Natural killer cell (primary cell): ENCODE measurements at regions of chr6 and their contacts with region 1.

Region 1: DNA sequence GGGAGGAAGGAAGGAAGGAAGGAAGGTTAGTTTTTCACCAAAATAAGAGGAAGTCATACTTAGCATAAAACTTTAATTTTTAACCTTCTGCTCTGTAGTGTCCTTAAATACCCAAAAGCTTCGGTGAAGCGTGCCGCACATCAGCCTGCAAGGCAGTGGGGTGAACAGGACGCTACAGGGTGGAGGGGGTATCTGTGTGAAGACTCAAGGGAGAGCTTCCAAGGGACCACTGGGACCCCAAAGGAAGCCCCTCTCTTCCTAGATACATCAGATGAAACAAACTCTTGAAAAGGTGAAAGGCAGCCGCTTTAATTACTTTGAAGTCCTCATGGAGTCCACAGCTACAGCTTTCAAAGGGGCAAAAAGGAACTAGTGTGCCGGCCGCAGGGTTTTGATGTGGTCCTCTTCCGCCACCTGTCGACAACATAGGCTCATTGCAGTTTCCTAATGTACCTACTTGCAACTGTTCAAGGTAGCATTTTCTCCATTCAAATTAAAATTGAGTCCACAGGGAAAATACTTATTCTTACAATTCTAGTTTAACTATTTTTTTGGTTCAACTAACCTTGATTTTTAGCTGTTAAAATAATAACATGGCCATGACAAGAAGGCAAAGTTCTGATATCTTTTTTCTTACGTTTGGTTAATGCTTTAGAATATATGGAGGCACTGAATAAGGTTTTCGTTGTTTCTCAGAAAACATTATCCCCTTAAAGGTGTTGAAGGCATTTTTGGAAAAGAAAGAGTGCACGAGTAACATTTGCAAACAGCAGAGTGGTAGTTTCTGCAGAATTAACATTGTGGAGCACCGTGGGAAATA is 135.0 kb upstream of the RIPOR2 start:
- DNase-seq: peak; percentile 73 to 94
- ATAC-seq: peak; percentile 96 to 100 (median 99)
- H3K4me3 ChIP-seq: peak overlapping the region; percentile 11
- H3K4me3 Mint-ChIP-seq: peak overlapping the region; percentile 55
- H3K27ac ChIP-seq: peak overlapping the region; percentile 60
- H3K27ac Mint-ChIP-seq: peak overlapping the region; percentile 82 to 85
- H3K4me1 ChIP-seq: peaks cover 3% of the 10 kb centered on the region
- H3K4me1 Mint-ChIP-seq: peaks cover 6 to 16% of the 10 kb centered on the region in 2 donors
- H3K27me3 ChIP-seq: no peaks in the 10 kb centered on the region
- H3K27me3 Mint-ChIP-seq: no peaks in the 10 kb centered on the region
- CTCF ChIP-seq: peak; percentile 89

Region 2: GRCh38 chr6:24855395-24856245 is 215.1 kb before region 1 on chr6:
- intact Hi-C with region 1: loop called (anchors 1 kb)
- DNase-seq: peak; percentile 48 to 92
- ATAC-seq: peak; percentile 77 to 84 (median 83)
- H3K4me3 ChIP-seq: no peak overlapping the region
- H3K4me3 Mint-ChIP-seq: peak overlapping the region; percentile 49
- H3K27ac ChIP-seq: peak overlapping the region; percentile 45
- H3K27ac Mint-ChIP-seq: peak overlapping the region; percentile 93 to 95
- H3K4me1 ChIP-seq: peaks cover 45% of the 10 kb centered on the region
- H3K4me1 Mint-ChIP-seq: peaks cover 50 to 59% of the 10 kb centered on the region in 2 donors
- H3K27me3 ChIP-seq: no peaks in the 10 kb centered on the region
- H3K27me3 Mint-ChIP-seq: no peaks in the 10 kb centered on the region
- CTCF ChIP-seq: peak; percentile 84

Region 3: GRCh38 chr6:25017932-25018567 is 52.7 kb before region 1 on chr6:
- intact Hi-C with region 1: loop called (anchors 2 kb)
- DNase-seq: peak; percentile 69 to 92
- ATAC-seq: peak; percentile 94 to 97 (median 97)
- H3K4me3 ChIP-seq: no peak overlapping the region
- H3K4me3 Mint-ChIP-seq: no peak overlapping the region
- H3K27ac ChIP-seq: no peak overlapping the region
- H3K27ac Mint-ChIP-seq: peak overlapping the region; percentile 76 to 84
- H3K4me1 ChIP-seq: peaks cover 9% of the 10 kb centered on the region
- H3K4me1 Mint-ChIP-seq: peaks cover 23 to 30% of the 10 kb centered on the region in 2 donors
- H3K27me3 ChIP-seq: no peaks in the 10 kb centered on the region
- H3K27me3 Mint-ChIP-seq: no peaks in the 10 kb centered on the region
- CTCF ChIP-seq: peak; percentile 88

Region 4: DNA sequence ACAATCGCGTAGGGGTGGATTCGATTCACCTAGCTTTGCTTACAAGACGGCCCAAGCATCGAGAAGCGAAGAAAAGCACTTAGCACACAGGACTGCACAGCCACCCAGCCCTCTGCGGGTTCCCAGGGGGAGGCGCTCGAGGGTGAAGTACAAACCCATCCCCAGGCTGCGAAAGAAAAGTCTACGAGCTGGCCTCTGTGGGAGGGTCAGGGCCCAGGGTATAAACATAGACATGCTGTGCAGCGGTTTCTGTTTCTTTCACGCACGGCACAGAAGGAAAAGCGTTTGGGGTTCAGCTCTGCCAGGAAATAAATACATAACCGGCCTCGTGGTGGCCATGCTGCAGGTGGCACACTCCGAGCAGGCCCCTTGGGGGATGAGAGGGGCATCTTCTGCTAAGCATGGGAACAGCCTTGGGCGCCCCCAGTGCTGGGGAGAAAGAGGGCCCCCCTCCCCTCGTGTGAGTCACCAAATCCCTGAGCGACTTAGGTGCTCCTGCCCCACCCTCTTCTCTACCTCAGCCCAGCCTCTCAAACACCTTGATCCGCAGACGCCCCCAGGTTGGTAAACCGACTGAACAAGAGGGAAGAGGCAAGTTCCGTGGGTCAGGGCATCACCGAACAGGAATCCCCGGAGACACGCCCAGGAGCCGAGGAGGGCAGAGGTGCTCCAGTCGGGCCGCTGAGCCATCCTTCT is 43.4 kb before region 1 on chr6:
- intact Hi-C with region 1: loop called (anchors 1 kb)
- DNase-seq: peak; percentile 58 to 90
- ATAC-seq: peak; percentile 96 to 98 (median 97)
- H3K4me3 ChIP-seq: peak overlapping the region; percentile 12
- H3K4me3 Mint-ChIP-seq: peak overlapping the region; percentile 63
- H3K27ac ChIP-seq: peak overlapping the region; percentile 58
- H3K27ac Mint-ChIP-seq: peak overlapping the region; percentile 68
- H3K4me1 ChIP-seq: peaks cover 26% of the 10 kb centered on the region
- H3K4me1 Mint-ChIP-seq: peaks cover 21 to 26% of the 10 kb centered on the region in 2 donors
- H3K27me3 ChIP-seq: no peaks in the 10 kb centered on the region
- H3K27me3 Mint-ChIP-seq: no peaks in the 10 kb centered on the region
- CTCF ChIP-seq: peak; percentile 40